ENCODE measurements at regions of chr4 and their contacts with region 1.

Region 1: DNA sequence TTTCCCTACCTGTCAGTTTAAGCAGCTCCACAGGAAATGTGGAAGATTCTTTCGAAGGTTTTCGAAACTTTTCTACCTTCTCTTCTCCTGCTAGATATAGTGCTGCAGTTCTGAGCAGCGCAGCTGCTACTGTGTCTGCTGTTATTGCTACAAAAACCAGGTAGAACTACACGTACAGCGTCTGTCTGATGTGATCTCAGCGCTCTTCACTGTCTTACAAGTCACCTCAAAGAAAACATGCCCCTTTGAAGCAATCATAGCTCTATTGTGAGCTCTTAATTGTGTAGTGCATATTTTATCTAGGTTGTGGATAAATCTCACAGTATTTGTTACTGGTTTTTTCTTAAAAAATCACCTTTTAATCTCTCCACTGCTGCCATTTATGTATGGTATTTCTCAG is 147.6 kb upstream of the BMPR1B start:
- DNase-seq: no peak
- H3K4me3 ChIP-seq: no peak overlapping the region
- H3K27ac ChIP-seq: no peak overlapping the region
- H3K4me1 ChIP-seq: no peaks in the 10 kb centered on the region
- H3K27me3 ChIP-seq: no peaks in the 10 kb centered on the region
- CTCF ChIP-seq: no peak
- POLR2A ChIP-seq: no peak

Region 2: GRCh38 chr4:94207469-94208224 is 402.5 kb before region 1 on chr4 and contains the start of gene SMARCAD1:
- intact Hi-C with region 1: no loop called
- DNase-seq: peak; percentile 82
- H3K4me3 ChIP-seq: peak within 1 kb of the TSS; percentile 62 to 82
- H3K27ac ChIP-seq: peak within 1 kb of the TSS; percentile 85 to 88
- H3K4me1 ChIP-seq: peaks cover 6% of the 10 kb centered on the region
- H3K27me3 ChIP-seq: no peaks in the 10 kb centered on the region
- CTCF ChIP-seq: peak in 1 of 4 experiments; percentile 11
- POLR2A ChIP-seq: no peak
- total RNA-seq, gene SMARCAD1: 22.4 to 22.9 TPM

Region 3: DNA sequence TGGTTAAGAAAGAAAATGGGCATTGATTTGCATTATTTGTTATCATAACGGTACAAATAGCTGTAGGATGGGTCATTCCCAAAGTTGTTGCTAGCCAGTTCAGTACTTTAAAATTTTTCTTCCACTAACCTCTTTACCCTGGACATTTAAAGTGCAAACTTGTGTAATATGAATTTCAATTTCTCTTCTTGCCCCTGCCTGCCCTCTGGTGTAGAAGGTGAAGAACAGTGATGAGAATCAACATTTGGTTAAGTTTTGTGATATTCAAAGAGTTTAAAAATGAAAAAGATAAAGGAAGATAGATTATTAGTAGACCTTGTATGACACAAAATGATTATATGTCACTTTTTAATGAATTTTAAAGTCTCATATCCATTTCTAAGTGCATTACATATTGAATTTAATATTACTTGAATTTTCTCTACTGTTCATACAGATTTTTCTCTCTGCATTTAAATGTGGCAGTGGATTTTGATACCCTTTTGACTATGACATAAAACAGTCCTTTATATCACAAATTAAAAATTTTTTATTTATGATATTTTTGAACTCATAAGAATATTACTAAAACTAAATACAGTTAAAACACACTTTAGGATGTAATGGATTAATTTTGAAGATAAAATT is 485.3 kb after region 1 on chr4:
- intact Hi-C with region 1: loop called (anchors 10 kb)
- DNase-seq: no peak
- H3K4me3 ChIP-seq: no peak overlapping the region
- H3K27ac ChIP-seq: peak overlapping the region in 1 of 2 donors; percentile 50
- H3K4me1 ChIP-seq: no peaks in the 10 kb centered on the region
- H3K27me3 ChIP-seq: no peaks in the 10 kb centered on the region
- CTCF ChIP-seq: peak in 3 of 4 experiments; percentile 35 to 81 (median 61)
- POLR2A ChIP-seq: no peak